ENCODE measurements at regions of chr14 and their contacts with region 1.

Region 1: GRCh38 chr14:58199726-58200479 is at the start of gene ACTR10:
- DNase-seq: peak; percentile 82
- H3K4me3 ChIP-seq: peak within 1 kb of the TSS; percentile 93 to 100 (median 100)
- H3K27ac ChIP-seq: peak within 1 kb of the TSS; percentile 77
- H3K4me1 ChIP-seq: peaks cover 18% of the 10 kb centered on the region
- H3K27me3 ChIP-seq: peaks cover 6% of the 10 kb centered on the region in 2 experiments
- CTCF ChIP-seq: no peak
- POLR2A ChIP-seq: peak; percentile 76
- total RNA-seq, gene ACTR10: 67.3 and 71.4 TPM in 2 replicates

Region 2: DNA sequence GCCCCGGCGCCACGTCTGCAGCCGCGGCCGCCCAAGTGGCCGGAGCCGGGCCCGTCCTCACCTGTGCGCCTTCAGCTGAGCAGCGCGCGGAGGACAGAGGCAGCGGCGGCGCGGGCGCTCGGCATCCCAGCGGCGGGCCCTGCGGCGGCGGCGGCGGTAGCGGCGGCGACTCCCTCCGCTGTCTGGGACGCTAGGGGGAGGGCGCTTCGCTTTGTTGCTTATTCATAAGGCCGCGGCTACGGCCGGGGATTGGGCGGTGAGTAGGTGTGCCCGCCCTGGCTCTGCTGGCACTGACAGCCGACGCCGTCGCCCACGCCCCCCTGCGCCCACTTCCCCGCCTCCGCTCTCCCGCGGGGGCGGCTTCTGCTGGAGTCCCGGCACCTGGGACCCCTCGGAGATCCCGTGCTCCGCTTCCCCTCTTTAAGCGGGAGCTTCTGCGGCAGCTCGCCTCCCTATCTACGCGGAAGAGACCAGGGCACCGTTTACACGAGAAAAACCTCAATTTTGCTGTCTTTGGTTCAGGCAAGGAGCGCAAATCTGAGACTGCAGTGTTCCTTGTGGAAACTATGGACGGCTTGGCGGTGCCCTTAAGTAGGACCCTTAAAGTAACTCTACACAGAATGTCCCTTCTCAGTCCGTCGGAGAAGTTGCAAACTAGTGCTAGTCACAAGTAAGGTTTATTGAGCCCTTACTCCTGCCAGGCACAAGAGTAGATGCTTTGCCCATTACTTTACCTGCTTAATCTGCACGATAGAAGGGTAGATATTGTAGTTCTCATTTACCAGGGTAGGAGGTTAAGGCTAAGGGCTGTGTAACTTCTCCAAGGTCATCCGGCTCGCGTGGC is 47.7 kb before region 1 on chr14 and contains the start of gene ARMH4:
- CTCF ChIA-PET with region 1: interaction called, 3 read pairs
- POLR2A ChIA-PET with region 1: no interaction called
- dilution Hi-C with region 1: no loop called
- intact Hi-C with region 1: loop called (anchors 1 kb)
- DNase-seq: peak; percentile 81
- H3K4me3 ChIP-seq: peak within 1 kb of the TSS; percentile 51 to 58 (median 56)
- H3K27ac ChIP-seq: no peak within 1 kb of the TSS
- H3K4me1 ChIP-seq: peaks cover 10% of the 10 kb centered on the region
- H3K27me3 ChIP-seq: peaks cover 26 to 42% of the 10 kb centered on the region in 2 experiments
- CTCF ChIP-seq: peak in 1 of 2 donors; percentile 11
- POLR2A ChIP-seq: no peak
- total RNA-seq, gene ARMH4: 2.3 and 3.0 TPM in 2 replicates

Region 3: DNA sequence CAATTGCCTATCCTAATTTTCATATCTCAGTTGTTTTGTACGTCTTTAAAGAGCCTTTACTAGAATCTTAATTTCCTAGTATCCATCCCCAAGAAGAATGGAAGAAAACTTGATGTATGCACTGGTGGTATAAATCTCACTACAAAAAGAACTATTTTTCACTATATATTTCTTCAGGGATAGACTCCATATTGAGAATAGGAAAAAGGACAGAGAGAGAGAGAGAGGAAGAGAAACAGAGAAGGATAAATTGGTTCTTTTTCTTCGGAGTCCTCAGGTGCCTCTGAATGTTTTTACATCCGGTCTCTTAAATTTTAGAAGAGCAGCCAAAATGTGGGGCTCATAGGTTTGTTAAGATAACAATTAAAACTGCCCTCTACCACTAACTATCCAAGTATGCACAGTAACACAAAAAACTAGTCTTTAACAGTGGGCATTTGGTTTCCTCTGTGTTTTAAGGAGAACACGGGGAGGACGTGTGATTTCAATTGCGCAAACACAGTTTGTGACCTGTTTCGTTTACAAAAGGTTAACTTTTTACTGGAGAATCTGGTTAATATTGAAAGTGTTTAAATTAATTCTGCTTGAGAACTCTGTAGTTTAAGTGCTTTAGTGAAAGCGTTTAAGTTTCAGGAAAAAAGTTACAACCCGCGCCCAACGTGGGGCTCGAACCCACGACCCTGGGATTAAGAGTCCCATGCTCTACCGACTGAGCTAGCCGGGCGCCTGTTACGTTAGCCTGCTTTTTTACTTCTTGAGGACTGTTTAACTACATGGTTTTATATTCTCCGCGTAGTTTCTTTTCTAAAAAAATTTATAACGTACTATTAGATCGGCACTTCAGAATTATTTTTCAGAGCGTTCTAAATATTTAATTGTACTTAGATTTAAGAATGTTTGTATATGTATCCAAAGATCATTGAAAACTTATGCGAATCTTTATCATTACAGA is 39.6 kb after region 1 on chr14:
- CTCF ChIA-PET with region 1: no interaction called
- POLR2A ChIA-PET with region 1: interaction called, 3 read pairs
- dilution Hi-C with region 1: no loop called
- intact Hi-C with region 1: loop called (anchors 1 kb)
- DNase-seq: peak; percentile 81
- H3K4me3 ChIP-seq: peak overlapping the region; percentile 38 to 100 (median 95)
- H3K27ac ChIP-seq: peak overlapping the region; percentile 52
- H3K4me1 ChIP-seq: peaks cover 10% of the 10 kb centered on the region
- H3K27me3 ChIP-seq: no peaks in the 10 kb centered on the region
- CTCF ChIP-seq: no peak
- POLR2A ChIP-seq: no peak

Region 4: DNA sequence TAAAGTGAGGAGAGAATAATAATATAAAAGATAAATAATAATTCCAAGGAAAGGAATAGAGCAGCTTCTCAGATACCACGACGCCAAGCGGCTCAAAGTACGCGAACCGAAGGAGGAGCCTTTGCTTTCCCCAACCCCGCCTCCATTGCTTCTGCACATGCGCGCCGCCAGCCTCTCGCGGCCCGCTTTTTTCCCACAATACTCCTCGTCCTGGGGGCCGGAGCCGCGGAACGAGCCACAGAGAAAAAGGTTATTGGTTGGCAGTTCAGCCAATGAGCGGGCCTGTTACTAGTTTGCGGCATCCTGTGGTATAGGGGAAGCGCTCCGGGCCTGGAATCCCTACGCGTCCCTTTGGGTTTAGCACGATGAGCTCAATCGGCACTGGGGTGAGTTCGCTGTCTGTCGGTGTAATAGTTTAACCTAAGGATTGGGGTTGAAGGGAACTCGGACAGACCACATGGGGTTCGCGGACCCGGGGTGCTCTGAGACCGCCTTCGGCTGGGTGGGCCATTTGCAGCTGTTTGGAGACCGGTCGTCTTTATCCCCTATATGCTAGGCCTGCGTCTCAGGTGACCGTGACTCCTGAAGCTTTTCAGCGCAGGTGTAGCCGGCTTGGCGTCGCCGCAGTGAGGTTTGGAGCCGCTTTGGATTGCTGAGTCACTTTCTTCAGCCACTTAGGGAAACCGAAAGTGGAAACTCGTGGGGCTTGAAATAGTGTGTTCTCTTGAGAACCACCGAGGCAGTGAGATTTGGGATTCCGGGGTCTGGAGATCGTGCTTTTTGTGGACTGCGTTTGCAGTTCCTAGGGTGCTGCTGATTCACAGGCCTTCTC is 44.9 kb after region 1 on chr14 and contains the start of gene PSMA3:
- CTCF ChIA-PET with region 1: no interaction called
- POLR2A ChIA-PET with region 1: interaction called, 3 read pairs
- dilution Hi-C with region 1: no loop called
- intact Hi-C with region 1: loop called (anchors 1 kb)
- DNase-seq: peak; percentile 98
- H3K4me3 ChIP-seq: peak within 1 kb of the TSS; percentile 77 to 98 (median 85)
- H3K27ac ChIP-seq: peak within 1 kb of the TSS; percentile 93
- H3K4me1 ChIP-seq: peaks cover 22% of the 10 kb centered on the region
- H3K27me3 ChIP-seq: no peaks in the 10 kb centered on the region
- CTCF ChIP-seq: no peak
- POLR2A ChIP-seq: peak; percentile 95
- total RNA-seq, gene PSMA3: 228 and 240 TPM in 2 replicates

Region 5: GRCh38 chr14:58427281-58428117 is 227.6 kb after region 1 on chr14 and contains the starts of genes KIAA0586 and TIMM9:
- CTCF ChIA-PET with region 1: no interaction called
- POLR2A ChIA-PET with region 1: no interaction called
- dilution Hi-C with region 1: no loop called
- intact Hi-C with region 1: loop called (anchors 2 kb)
- DNase-seq: peak; percentile 98
- H3K4me3 ChIP-seq: peak within 1 kb of the TSS; percentile 72 to 96 (median 85)
- H3K27ac ChIP-seq: peak within 1 kb of the TSS; percentile 95
- H3K4me1 ChIP-seq: peaks cover 21% of the 10 kb centered on the region
- H3K27me3 ChIP-seq: no peaks in the 10 kb centered on the region
- CTCF ChIP-seq: no peak
- POLR2A ChIP-seq: peak; percentile 88
- total RNA-seq, gene KIAA0586: 25.9 and 29.2 TPM in 2 replicates
- total RNA-seq, gene TIMM9: 38.0 and 42.4 TPM in 2 replicates